PC-3 (cell line): ENCODE measurements at regions of chr12 and their contacts with region 1.

Region 1: GRCh38 chr12:28327722-28328121 is 137.5 kb downstream of the CCDC91 start:
- DNase-seq: no peak
- ATAC-seq: no peak
- H3K4me3 ChIP-seq: no peak overlapping the region
- H3K27ac ChIP-seq: no peak overlapping the region
- H3K4me1 ChIP-seq: peaks cover 10% of the 10 kb centered on the region
- H3K27me3 ChIP-seq: no peaks in the 10 kb centered on the region
- CTCF ChIP-seq: no peak

Region 2: DNA sequence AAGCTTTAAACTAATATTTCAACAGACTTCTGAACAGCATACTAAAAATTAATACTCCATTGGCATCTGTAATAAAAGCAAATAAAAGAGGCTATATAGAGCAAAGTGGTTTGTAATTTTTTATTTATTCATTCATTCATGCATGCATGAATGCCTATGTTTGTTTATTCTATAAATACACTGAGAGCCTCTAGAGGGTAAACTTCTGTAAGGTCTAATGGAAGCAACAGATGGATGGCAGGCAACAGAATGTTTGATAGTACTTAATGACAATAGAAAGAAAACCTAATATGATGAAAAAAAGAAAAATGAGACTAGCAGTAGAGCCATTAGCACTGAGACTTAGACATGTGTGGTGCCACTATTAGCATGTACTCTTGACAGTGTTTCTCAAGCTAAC is 115.6 kb after region 1 on chr12:
- CTCF ChIA-PET with region 1: no interaction called
- POLR2A ChIA-PET with region 1: no interaction called
- intact Hi-C with region 1: loop called (anchors 5 kb)
- DNase-seq: peak; percentile 34
- ATAC-seq: peak; percentile 83
- H3K4me3 ChIP-seq: no peak overlapping the region
- H3K27ac ChIP-seq: no peak overlapping the region
- H3K4me1 ChIP-seq: peaks cover 6% of the 10 kb centered on the region; the same call in 1 of the 2 replicates
- H3K27me3 ChIP-seq: no peaks in the 10 kb centered on the region
- CTCF ChIP-seq: no peak

Region 3: GRCh38 chr12:28611115-28611435 is 283.4 kb after region 1 on chr12:
- CTCF ChIA-PET with region 1: no interaction called
- POLR2A ChIA-PET with region 1: no interaction called
- intact Hi-C with region 1: no loop called
- DNase-seq: peak; percentile 91
- ATAC-seq: peak; percentile 92
- H3K4me3 ChIP-seq: no peak overlapping the region
- H3K27ac ChIP-seq: peak overlapping the region; percentile 65
- H3K4me1 ChIP-seq: peaks cover 24% of the 10 kb centered on the region
- H3K27me3 ChIP-seq: no peaks in the 10 kb centered on the region
- CTCF ChIP-seq: no peak